Common myeloid progenitor, CD34-positive (primary cell): ENCODE measurements at regions of chr18 and their contacts with region 1.

Region 1: DNA sequence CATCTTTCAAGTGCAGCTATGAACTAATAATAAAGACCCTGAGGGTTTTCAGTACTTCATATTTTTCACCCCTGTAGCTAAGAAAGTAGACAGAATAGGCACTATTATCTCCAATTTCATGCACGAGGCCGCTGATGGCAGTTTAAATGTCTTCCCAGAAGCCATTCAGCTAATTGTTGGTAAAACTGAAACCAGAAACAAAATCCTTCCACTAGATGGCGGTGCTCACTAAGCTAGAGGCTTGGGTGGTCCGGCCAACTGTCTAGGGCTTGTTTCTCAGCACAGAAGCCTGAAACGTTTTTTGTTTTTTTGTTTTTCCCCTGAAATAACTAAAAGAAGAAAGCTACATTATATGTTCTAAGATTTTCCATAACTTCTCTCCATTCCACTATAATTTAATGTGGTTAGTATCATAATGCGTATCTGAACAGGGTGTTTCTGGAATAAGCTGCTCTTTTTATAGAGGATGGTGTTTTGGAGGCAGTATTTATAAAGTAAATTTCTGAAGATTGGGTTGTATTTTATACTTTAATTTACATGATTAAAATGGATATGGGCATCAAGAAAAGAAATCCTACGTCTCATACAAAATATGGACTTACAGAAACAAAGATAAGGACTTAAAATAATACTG is 159.4 kb downstream of the PIK3C3 start:
- DNase-seq: peak; percentile 77 to 90 (median 88)
- H3K4me3 ChIP-seq: peak overlapping the region in 1 of 7 experiments; percentile 59
- H3K27ac ChIP-seq: peak overlapping the region; percentile 11 to 44
- H3K4me1 ChIP-seq: peaks cover 4 to 11% (median 10%) of the 10 kb centered on the region in 4 experiments
- H3K27me3 ChIP-seq: no peaks in the 10 kb centered on the region

Region 2: DNA sequence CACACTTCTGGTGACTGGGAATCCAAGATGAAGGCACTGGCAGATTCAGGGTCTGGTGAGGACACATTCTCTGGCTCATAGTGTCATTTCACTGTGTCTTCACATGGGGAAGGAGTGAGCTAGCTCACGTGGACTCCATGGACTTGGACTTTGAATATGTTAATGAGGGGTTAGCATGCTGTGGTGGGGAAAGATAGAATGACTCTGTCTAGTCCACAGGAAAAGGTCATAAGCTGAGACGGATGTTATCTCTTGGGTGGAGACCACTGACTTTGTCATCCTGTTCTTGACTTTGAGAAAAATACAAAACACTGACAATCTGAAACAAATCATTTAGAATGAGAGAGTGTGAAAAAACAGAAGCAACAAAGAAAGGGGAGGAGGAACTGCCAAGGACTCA is 13.5 kb before region 1 on chr18:
- CTCF ChIA-PET with region 1: interaction called, 10 read pairs
- POLR2A ChIA-PET with region 1: no interaction called
- DNase-seq: peak in 1 of 3 donors; percentile 1
- H3K4me3 ChIP-seq: no peak overlapping the region
- H3K27ac ChIP-seq: no peak overlapping the region
- H3K4me1 ChIP-seq: no peaks in the 10 kb centered on the region
- H3K27me3 ChIP-seq: peaks cover 0 to 3% (median 0%) of the 10 kb centered on the region in 5 experiments

Region 3: GRCh38 chr18:42126586-42126985 is 12.2 kb after region 1 on chr18:
- CTCF ChIA-PET with region 1: interaction called, 10 read pairs
- POLR2A ChIA-PET with region 1: no interaction called
- DNase-seq: no peak
- H3K4me3 ChIP-seq: no peak overlapping the region
- H3K27ac ChIP-seq: no peak overlapping the region
- H3K4me1 ChIP-seq: no peaks in the 10 kb centered on the region
- H3K27me3 ChIP-seq: peaks cover 0 to 3% (median 0%) of the 10 kb centered on the region in 5 experiments

Region 4: DNA sequence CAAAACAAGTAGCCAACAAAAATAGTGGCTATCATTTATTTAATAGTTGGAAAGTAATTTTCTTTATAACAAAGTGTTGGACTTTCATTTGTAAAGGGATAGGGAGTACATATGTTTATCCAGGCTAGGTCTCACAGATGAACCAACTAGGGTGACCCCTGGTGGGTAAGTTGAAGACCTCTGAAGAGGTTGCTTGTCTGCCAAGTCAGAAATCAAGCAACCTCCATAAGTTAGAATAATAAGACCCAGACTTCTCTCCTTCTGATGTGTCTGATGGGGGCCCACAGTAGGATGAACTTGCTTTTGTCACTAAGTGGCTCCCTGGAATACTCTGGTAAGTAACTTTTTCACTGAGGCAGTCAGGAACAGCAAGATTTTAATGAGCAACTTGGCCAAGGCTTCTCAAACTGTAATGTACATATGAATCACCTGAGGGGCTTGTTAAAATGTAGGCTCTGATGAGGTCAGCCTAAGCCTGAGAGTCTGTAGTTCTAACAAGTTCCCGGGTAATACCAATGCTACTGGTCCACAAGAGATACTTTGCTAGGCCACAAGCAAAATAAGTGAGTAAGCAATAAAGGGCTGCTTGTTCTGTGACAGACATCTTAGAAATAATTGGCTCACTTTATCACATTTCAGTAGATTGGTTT is 160.2 kb after region 1 on chr18:
- CTCF ChIA-PET with region 1: interaction called, 12 read pairs
- POLR2A ChIA-PET with region 1: no interaction called
- DNase-seq: peak; percentile 34 to 66 (median 60)
- H3K4me3 ChIP-seq: no peak overlapping the region
- H3K27ac ChIP-seq: no peak overlapping the region
- H3K4me1 ChIP-seq: no peaks in the 10 kb centered on the region
- H3K27me3 ChIP-seq: peaks cover 0 to 2% (median 0%) of the 10 kb centered on the region in 5 experiments

Region 5: DNA sequence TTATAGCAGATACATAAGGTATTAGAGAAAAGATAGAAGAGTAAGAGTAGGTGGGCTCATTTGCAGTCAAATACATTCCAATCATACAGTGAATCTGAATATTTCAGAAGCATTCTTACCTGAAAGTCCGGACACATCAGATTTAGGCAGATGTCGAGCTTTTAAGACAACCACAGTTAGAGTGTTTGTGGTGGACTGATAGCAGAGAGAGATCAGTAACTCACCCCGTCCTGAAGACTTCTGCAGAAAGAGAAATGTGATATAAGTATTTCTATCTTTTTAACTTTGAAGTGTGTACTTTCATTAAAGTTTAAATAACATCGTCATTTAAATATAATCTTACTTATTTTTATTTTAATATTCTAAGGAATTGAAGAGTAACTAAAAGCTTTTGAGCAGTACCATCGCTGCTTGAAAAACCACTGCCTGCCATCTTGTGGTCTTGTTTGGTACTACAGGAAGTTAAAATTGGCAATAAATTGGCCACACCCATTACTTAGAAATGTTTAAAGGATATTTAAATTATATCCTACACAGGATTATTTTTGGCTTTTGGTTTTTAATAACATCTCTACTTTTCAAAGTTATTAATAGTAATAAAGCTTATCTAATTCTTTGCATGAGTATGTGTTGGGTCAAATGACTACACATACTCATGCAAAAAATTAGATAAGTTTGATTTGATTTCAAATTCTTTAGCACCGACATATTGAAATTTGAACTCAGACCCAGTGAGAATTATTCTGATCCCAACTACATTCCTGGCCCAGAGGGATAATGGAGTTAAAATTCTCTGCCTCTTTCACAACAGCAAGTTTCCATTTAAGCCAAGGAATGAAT is 1157.4 kb after region 1 on chr18:
- CTCF ChIA-PET with region 1: interaction called, 50 read pairs
- POLR2A ChIA-PET with region 1: no interaction called
- DNase-seq: peak; percentile 43 to 74 (median 60)
- H3K4me3 ChIP-seq: no peak overlapping the region
- H3K27ac ChIP-seq: no peak overlapping the region
- H3K4me1 ChIP-seq: no peaks in the 10 kb centered on the region
- H3K27me3 ChIP-seq: peaks cover 0 to 5% (median 0%) of the 10 kb centered on the region in 5 experiments

Region 6: DNA sequence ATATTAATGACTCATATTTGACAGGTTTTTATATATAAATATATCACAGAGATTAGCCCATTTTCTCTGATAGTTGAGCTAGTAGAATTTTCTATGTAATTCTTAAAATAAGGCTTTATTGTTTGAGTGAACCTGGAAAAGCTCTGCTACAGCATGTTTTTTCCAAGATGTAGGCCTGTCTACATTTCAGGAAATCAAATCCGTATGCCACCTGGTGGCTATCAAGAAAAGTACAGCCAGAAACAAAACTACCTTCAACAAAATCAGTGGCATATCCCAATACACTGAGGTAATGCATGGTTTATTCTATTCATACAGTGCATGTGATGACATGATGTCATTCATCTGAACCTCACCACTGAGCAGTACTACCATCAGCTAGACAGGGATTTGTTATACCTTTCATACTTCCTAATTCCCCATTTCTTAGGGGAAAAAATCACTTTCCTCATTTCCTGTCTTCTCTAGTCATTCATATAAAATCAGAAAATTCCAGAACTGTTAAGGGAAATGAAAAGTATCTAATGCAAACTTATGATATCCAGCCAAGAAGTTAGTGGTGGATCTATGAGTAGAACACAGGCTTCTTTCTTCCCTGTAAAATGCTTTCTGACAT is 1473.2 kb after region 1 on chr18:
- CTCF ChIA-PET with region 1: interaction called, 12 read pairs
- POLR2A ChIA-PET with region 1: no interaction called
- DNase-seq: peak; percentile 37 to 56 (median 52)
- H3K4me3 ChIP-seq: no peak overlapping the region
- H3K27ac ChIP-seq: no peak overlapping the region
- H3K4me1 ChIP-seq: no peaks in the 10 kb centered on the region
- H3K27me3 ChIP-seq: no peaks in the 10 kb centered on the region